Cardiac septum (tissue), 1 donor: ENCODE measurements at regions of chr4 and their contacts with region 1.

Region 1: DNA sequence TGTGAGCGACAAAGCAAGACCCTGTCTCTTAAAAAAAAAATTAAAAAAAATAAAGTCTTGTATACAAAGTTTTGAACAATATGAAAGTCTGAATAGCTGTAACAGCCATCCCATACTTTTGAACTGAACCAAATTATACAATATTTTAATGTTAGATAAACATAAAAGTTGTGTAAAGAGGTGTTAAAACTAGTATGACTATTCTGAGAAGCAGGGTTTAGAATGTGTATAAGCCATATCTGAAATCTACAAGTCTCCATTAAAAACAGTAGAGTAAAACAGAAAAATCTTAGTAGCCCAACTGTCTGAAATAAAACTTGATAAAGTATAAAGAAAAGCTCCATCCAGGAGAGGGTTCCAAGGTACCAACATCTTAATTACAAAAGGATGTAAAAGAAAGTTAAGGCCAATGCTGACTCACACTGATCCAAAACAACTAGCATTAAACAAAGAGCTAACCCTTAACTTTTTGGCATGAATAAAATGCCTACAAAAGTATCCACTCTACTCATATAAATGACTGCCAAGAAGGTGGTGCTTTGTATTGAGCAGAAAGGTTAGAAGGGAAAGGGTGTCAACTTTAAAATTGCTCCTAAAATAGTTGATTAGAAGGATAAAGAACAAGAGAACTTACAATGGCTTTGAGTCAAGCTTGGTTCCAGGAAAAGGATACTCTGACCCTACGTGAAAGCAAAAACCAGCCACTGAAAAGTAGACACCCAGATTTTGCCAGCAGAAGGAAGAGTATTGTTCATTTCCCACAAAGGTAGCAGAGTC is 18.5 kb downstream of the CNOT6L start:
- DNase-seq: no peak

Region 2: DNA sequence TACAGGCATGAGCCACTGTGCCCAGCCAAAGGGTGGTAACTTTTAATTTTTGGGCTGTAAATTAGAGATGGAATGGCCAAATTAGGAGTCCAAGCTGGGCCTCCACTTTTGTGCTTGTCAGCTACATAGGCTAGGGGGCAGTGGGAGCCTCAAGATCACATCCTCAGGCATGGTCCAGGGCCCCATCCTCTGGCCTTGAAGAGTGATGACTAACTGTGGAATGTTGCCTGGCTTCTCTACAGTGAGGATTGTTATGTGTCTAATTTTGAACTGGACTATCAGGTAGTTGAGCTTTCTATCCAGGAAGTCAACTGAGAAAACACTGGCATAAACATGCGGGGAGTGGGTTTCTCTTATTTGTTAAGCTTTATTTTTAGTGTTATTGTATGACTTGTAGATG is 610.6 kb before region 1 on chr4:
- intact Hi-C with region 1: no loop called
- DNase-seq: no peak

Region 3: GRCh38 chr4:77734928-77735327 is 65.7 kb before region 1 on chr4:
- intact Hi-C with region 1: loop called (anchors 10 kb)
- DNase-seq: no peak